ENCODE measurements at regions of chrX and their contacts with region 1.

Region 1: DNA sequence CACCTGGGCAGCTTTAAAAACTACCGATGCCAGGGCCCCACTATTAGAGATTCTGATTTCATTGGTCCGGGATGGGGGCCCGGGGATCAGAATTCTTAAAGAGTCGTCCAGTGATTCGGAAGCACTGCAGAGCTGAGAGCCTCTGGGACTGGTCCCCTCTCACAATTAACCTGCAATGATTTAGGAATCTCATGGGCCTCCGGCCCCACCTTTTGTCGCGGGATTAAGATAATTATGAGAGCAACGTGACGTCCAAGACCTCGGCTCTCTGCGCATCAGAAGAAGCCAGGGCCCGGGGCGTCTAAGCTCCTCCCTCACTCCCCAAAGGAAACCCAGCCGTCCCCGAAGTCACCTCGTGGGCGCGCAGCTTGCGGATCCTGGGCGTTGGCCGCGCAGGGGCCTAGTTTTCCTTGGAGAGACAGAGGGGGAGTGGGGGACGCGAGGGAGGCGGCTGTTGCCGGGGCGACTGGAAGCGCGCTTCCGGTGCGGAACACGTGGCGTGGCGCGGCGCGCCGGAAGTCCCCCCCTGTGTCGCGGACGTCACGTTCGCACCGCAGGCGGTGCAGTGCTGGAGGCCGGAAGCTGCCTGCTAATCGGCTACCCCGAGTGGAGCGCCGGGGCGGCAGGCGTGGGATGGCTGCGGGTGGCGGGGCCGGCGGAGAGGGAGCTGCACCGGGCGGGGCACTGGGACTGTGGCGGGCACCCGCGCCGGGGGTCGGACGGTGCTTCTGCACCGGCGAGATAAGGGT is at the start of gene GEMIN8:
- DNase-seq: peak; percentile 60 to 93 (median 87)
- ATAC-seq: peak; percentile 88
- H3K4me3 ChIP-seq: peak within 1 kb of the TSS; percentile 82 to 98
- H3K4me3 Mint-ChIP-seq: peak within 1 kb of the TSS; percentile 94
- H3K27ac ChIP-seq: peak within 1 kb of the TSS; percentile 93 to 95
- H3K27ac Mint-ChIP-seq: peak within 1 kb of the TSS; percentile 98
- H3K4me1 ChIP-seq: peaks cover 21% of the 10 kb centered on the region
- H3K4me1 Mint-ChIP-seq: peaks cover 39% of the 10 kb centered on the region
- H3K27me3 ChIP-seq: no peaks in the 10 kb centered on the region
- H3K27me3 Mint-ChIP-seq: no peaks in the 10 kb centered on the region
- CTCF ChIP-seq: no peak
- total RNA-seq, gene GEMIN8: 7.8 to 9.4 TPM

Region 2: DNA sequence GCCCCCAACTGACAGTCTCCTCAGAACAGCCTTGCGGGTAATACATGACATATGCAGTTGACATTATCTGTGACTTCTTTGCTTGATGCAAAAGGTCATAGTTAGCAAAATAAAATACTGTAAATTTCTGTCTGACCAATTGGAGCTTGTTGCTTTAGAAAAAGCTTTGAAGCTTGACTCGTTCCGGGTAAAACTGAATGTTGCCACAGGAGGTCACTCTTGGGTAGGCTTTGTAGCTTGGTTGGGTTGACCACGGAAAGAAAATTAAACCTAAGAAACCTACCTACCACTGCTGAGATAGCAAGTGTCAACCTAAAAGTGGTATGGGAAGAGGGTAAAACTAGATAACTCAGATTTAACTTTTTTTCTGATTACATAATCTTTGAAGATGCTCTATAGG is 1215.2 kb before region 1 on chrX:
- CTCF ChIA-PET with region 1: no interaction called
- POLR2A ChIA-PET with region 1: no interaction called
- intact Hi-C with region 1: loop called in 1 of 2 experiments (anchors 10 kb)
- DNase-seq: peak in 6 of 9 experiments; percentile 12 to 62 (median 30)
- ATAC-seq: peak; percentile 58
- H3K4me3 ChIP-seq: no peak overlapping the region
- H3K4me3 Mint-ChIP-seq: no peak overlapping the region
- H3K27ac ChIP-seq: no peak overlapping the region
- H3K27ac Mint-ChIP-seq: no peak overlapping the region
- H3K4me1 ChIP-seq: no peaks in the 10 kb centered on the region
- H3K4me1 Mint-ChIP-seq: no peaks in the 10 kb centered on the region
- H3K27me3 ChIP-seq: no peaks in the 10 kb centered on the region
- H3K27me3 Mint-ChIP-seq: no peaks in the 10 kb centered on the region
- CTCF ChIP-seq: peak; percentile 28

Region 3: GRCh38 chrX:13506574-13506973 is 523.0 kb before region 1 on chrX:
- CTCF ChIA-PET with region 1: interaction called, 45 read pairs
- POLR2A ChIA-PET with region 1: interaction called, 3 read pairs
- intact Hi-C with region 1: loop called (anchors 1 kb)
- DNase-seq: peak in 8 of 9 experiments; percentile 13 to 70 (median 56)
- ATAC-seq: no peak
- H3K4me3 ChIP-seq: no peak overlapping the region
- H3K4me3 Mint-ChIP-seq: no peak overlapping the region
- H3K27ac ChIP-seq: no peak overlapping the region
- H3K27ac Mint-ChIP-seq: no peak overlapping the region
- H3K4me1 ChIP-seq: no peaks in the 10 kb centered on the region
- H3K4me1 Mint-ChIP-seq: peaks cover 2% of the 10 kb centered on the region
- H3K27me3 ChIP-seq: no peaks in the 10 kb centered on the region
- H3K27me3 Mint-ChIP-seq: no peaks in the 10 kb centered on the region
- CTCF ChIP-seq: peak; percentile 65

Region 4: GRCh38 chrX:13688958-13689740 is 340.4 kb before region 1 on chrX and contains the start of gene RAB9A:
- CTCF ChIA-PET with region 1: interaction called, 5 read pairs
- POLR2A ChIA-PET with region 1: no interaction called
- intact Hi-C with region 1: loop called in 1 of 2 experiments (anchors 1 kb)
- DNase-seq: peak; percentile 58 to 85 (median 78)
- ATAC-seq: peak; percentile 88
- H3K4me3 ChIP-seq: peak within 1 kb of the TSS; percentile 79 to 82
- H3K4me3 Mint-ChIP-seq: peak within 1 kb of the TSS; percentile 95
- H3K27ac ChIP-seq: peak within 1 kb of the TSS; percentile 80 to 90
- H3K27ac Mint-ChIP-seq: peak within 1 kb of the TSS; percentile 98
- H3K4me1 ChIP-seq: peaks cover 25% of the 10 kb centered on the region
- H3K4me1 Mint-ChIP-seq: peaks cover 60% of the 10 kb centered on the region
- H3K27me3 ChIP-seq: no peaks in the 10 kb centered on the region
- H3K27me3 Mint-ChIP-seq: no peaks in the 10 kb centered on the region
- CTCF ChIP-seq: no peak
- total RNA-seq, gene RAB9A: 19.4 to 21.5 TPM

Region 5: DNA sequence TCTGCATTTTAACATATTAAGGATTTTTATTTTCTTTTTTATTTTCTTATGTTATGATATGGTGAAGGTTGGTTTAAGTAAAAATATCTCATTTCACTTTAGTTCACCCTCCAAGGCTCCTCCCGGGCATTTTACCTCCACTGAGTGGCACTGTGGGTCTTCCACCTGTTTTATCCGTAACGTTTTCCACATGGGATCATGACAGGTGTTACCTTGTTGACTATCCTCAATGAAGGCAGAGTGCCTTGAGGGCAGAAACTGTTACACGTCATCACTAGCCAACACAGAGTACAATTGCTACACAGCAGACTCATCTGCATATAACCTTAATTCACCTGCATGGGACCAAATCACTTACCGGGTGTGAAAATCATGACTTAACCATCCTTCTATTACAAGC is 105.8 kb before region 1 on chrX:
- CTCF ChIA-PET with region 1: no interaction called
- POLR2A ChIA-PET with region 1: no interaction called
- intact Hi-C with region 1: no loop called
- DNase-seq: no peak
- ATAC-seq: no peak
- H3K4me3 ChIP-seq: no peak overlapping the region
- H3K4me3 Mint-ChIP-seq: no peak overlapping the region
- H3K27ac ChIP-seq: no peak overlapping the region
- H3K27ac Mint-ChIP-seq: no peak overlapping the region
- H3K4me1 ChIP-seq: no peaks in the 10 kb centered on the region
- H3K4me1 Mint-ChIP-seq: no peaks in the 10 kb centered on the region
- H3K27me3 ChIP-seq: no peaks in the 10 kb centered on the region
- H3K27me3 Mint-ChIP-seq: no peaks in the 10 kb centered on the region
- CTCF ChIP-seq: no peak

Region 6: DNA sequence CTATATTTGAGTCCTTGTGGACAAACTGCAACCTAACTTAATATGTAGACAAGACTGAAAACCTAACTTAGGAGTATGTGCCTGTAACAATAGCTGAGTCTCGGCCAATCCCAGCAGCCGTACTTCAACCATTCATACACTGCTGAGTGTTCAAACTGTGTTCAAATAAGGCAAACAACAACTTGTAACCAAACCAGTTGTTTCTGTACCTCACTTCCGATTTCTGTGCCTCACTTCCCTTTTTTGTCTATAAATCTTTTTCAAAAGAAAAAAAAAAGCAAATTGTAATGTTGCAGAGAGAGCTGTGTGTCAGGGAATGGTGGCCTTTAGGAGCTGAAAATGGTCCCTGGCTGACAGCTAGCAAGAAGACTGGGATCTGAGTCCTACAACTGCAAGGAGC is 45.9 kb before region 1 on chrX:
- CTCF ChIA-PET with region 1: no interaction called
- POLR2A ChIA-PET with region 1: no interaction called
- intact Hi-C with region 1: loop called in 1 of 2 experiments (anchors 2 kb)
- DNase-seq: no peak
- ATAC-seq: no peak
- H3K4me3 ChIP-seq: no peak overlapping the region
- H3K4me3 Mint-ChIP-seq: no peak overlapping the region
- H3K27ac ChIP-seq: no peak overlapping the region
- H3K27ac Mint-ChIP-seq: no peak overlapping the region
- H3K4me1 ChIP-seq: no peaks in the 10 kb centered on the region
- H3K4me1 Mint-ChIP-seq: no peaks in the 10 kb centered on the region
- H3K27me3 ChIP-seq: no peaks in the 10 kb centered on the region
- H3K27me3 Mint-ChIP-seq: no peaks in the 10 kb centered on the region
- CTCF ChIP-seq: no peak

Region 7: GRCh38 chrX:14043209-14043608 is 13.6 kb after region 1 on chrX:
- CTCF ChIA-PET with region 1: no interaction called
- POLR2A ChIA-PET with region 1: no interaction called
- intact Hi-C with region 1: no loop called
- DNase-seq: no peak
- ATAC-seq: no peak
- H3K4me3 ChIP-seq: no peak overlapping the region
- H3K4me3 Mint-ChIP-seq: no peak overlapping the region
- H3K27ac ChIP-seq: no peak overlapping the region
- H3K27ac Mint-ChIP-seq: no peak overlapping the region
- H3K4me1 ChIP-seq: no peaks in the 10 kb centered on the region
- H3K4me1 Mint-ChIP-seq: no peaks in the 10 kb centered on the region
- H3K27me3 ChIP-seq: no peaks in the 10 kb centered on the region
- H3K27me3 Mint-ChIP-seq: peaks cover 6% of the 10 kb centered on the region
- CTCF ChIP-seq: no peak

Measured in CD8-positive, alpha-beta T cell (primary cell).